ENCODE measurements at regions of chr15 and their contacts with region 1.

Region 1: GRCh38 chr15:63752075-63752684 is 81.6 kb downstream of the HERC1 start:
- DNase-seq: peak in 3 of 6 donors; percentile 20 to 37 (median 24)
- ATAC-seq: peak; percentile 50 to 93 (median 91)
- H3K4me3 ChIP-seq: no peak overlapping the region
- H3K27ac ChIP-seq: no peak overlapping the region
- H3K4me1 ChIP-seq: no peaks in the 10 kb centered on the region
- H3K27me3 ChIP-seq: no peaks in the 10 kb centered on the region
- CTCF ChIP-seq: peak in 3 of 4 donors; percentile 44 to 58 (median 47)

Region 2: DNA sequence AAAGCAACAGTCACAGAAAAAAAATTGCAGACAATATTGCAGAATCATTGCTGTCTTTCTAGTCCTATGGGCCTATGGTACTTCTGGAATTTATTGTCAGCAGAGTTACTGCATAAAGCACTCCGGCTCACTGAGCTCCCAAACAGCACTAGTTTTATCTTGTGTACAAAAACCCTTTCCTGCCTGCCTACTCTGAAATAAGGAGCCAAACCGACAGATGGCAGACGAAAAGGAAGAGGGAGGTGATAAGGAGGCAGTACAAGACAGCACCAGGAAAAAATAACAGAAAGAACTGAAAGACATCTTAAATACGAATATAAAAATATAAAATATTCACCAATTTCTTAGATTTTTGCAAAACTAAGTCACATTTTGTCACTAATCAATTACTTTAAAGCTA is 66.0 kb after region 1 on chr15:
- intact Hi-C with region 1: no loop called
- DNase-seq: peak in 1 of 6 donors; percentile 11
- ATAC-seq: peak; percentile 54 to 85 (median 76)
- H3K4me3 ChIP-seq: no peak overlapping the region
- H3K27ac ChIP-seq: no peak overlapping the region
- H3K4me1 ChIP-seq: peaks cover 29 to 40% (median 29%) of the 10 kb centered on the region in 3 donors
- H3K27me3 ChIP-seq: no peaks in the 10 kb centered on the region
- CTCF ChIP-seq: no peak

Region 3: GRCh38 chr15:63891079-63891767 is 139.0 kb after region 1 on chr15:
- intact Hi-C with region 1: loop called in 2 of 3 experiments (anchors 5 to 10 kb)
- DNase-seq: peak; percentile 51 to 91 (median 76)
- ATAC-seq: peak; percentile 82 to 92 (median 88)
- H3K4me3 ChIP-seq: no peak overlapping the region
- H3K27ac ChIP-seq: no peak overlapping the region
- H3K4me1 ChIP-seq: no peaks in the 10 kb centered on the region
- H3K27me3 ChIP-seq: no peaks in the 10 kb centered on the region
- CTCF ChIP-seq: peak; percentile 65 to 87 (median 86)

Region 4: DNA sequence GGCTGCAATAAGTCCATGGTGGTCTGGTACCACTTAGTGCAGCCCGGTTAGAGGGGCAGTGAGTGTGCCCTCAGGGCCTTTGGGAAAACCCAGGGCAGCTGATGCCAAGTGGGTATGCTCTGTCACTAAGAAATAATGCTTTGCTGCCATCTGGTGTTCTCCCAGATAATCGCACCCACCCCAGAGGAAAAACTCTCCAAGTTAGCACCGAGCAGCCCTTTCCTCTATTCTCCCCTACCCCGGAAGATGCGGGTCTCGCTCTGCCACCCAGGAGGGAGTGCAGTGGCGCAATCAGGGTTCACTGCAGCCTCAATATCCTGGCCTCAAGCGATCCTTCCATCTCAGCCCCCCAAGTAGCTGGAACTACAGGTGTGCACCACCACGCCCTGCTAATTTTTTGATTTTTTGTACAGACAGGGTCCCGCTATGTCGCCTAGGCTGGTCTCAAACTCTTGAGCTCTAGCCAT is 315.4 kb after region 1 on chr15:
- intact Hi-C with region 1: loop called in 2 of 3 experiments (anchors 5 kb)
- DNase-seq: peak in 5 of 6 donors; percentile 53 to 80 (median 67)
- ATAC-seq: peak; percentile 64 to 79 (median 74)
- H3K4me3 ChIP-seq: no peak overlapping the region
- H3K27ac ChIP-seq: no peak overlapping the region
- H3K4me1 ChIP-seq: peaks cover 12 to 32% (median 23%) of the 10 kb centered on the region in 3 donors
- H3K27me3 ChIP-seq: no peaks in the 10 kb centered on the region
- CTCF ChIP-seq: peak; percentile 60 to 82 (median 75)